ENCODE measurements at regions of chr7 and their contacts with region 1.

Region 1: DNA sequence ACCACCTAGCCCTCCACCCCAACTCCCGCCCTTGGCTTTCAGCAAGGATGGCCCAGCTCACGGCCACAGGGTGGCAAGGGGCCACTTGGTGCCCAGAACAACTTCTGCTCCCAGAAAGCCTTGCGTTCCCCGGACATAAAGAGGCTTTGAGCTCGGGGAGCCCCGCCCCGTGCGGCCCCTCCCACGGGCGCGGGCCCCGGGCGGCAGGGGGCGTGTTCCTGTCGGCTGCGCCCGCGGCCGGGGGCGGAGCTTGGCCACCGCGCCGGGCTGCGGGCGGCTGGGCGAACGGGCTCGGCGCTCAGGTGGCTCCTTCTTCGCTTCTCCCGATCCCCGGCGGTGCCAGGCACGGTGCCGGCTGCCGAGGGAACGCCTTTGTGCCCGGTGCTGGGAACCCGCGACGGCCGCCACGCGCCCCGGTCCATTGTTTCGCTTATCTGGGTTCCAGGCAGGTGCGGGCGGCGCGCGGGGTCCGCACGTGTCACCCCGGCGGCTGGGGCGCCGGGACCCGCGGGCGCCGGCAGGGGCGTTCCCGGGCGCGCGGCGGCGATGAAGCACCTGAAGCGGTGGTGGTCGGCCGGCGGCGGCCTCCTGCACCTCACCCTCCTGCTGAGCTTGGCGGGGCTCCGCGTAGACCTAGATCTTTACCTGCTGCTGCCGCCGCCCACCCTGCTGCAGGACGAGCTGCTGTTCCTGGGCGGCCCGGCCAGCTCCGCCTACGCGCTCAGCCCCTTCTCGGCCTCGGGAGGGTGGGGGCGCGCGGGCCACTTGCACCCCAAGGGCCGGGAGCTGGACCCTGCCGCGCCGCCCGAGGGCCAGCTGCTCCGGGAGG is at the start of gene NFE2L3:
- DNase-seq: peak in 1 of 2 experiments; percentile 87
- H3K4me3 ChIP-seq: peak within 1 kb of the TSS; percentile 65 to 99 (median 95)
- H3K27ac ChIP-seq: peak within 1 kb of the TSS; percentile 91
- H3K4me1 ChIP-seq: peaks cover 17 to 32% (median 22%) of the 10 kb centered on the region in 4 experiments
- H3K27me3 ChIP-seq: peaks cover 0 to 7% (median 0%) of the 10 kb centered on the region in 4 experiments; a peak in 2 of 7 replicates
- CTCF ChIP-seq: peak in 1 of 3 experiments; percentile 18; a peak in 1 of 4 replicates
- EP300 ChIP-seq: peak in 1 of 2 experiments; percentile 4; a peak in 1 of 3 replicates
- POLR2A ChIP-seq: peak; percentile 67 to 77
- RAD21 ChIP-seq: peak in 1 of 2 experiments; percentile 24; a peak in 1 of 4 replicates
- total RNA-seq, gene NFE2L3: 62.6 and 64.9 TPM in 2 replicates

Region 2: DNA sequence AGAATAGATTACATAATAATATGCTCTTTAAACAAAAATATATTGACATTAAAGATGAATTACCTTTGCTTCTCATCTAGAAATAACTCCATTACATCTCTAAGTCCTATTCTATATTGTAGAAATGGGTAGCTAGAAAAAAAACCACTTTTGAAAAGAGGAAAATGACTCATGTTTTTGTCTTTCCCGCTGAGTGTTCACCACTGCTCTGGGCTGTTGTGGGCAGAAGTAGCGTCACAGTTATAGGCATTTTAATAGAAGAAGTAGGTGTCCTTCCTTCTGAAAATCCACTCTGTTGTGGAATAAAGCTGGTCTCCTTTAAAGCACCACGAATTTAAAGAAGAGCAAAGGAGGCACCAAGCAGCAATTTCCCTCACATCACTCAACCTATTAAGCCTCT is 117.8 kb before region 1 on chr7:
- CTCF ChIA-PET with region 1: no interaction called
- POLR2A ChIA-PET with region 1: no interaction called
- DNase-seq: no peak
- H3K4me3 ChIP-seq: no peak overlapping the region
- H3K27ac ChIP-seq: no peak overlapping the region
- H3K4me1 ChIP-seq: no peaks in the 10 kb centered on the region
- H3K27me3 ChIP-seq: no peaks in the 10 kb centered on the region
- CTCF ChIP-seq: no peak
- EP300 ChIP-seq: no peak
- POLR2A ChIP-seq: no peak
- RAD21 ChIP-seq: no peak

Region 3: GRCh38 chr7:26167301-26167934 is 15.3 kb after region 1 on chr7:
- CTCF ChIA-PET with region 1: interaction called, 3 read pairs
- POLR2A ChIA-PET with region 1: interaction called, 25 read pairs
- DNase-seq: no peak
- H3K4me3 ChIP-seq: no peak overlapping the region
- H3K27ac ChIP-seq: no peak overlapping the region
- H3K4me1 ChIP-seq: peaks cover 5 to 16% (median 10%) of the 10 kb centered on the region in 4 experiments; a peak in 6 of 7 replicates
- H3K27me3 ChIP-seq: no peaks in the 10 kb centered on the region
- CTCF ChIP-seq: no peak
- EP300 ChIP-seq: no peak
- POLR2A ChIP-seq: no peak
- RAD21 ChIP-seq: no peak

Region 4: GRCh38 chr7:26193432-26194207 is 41.5 kb after region 1 on chr7:
- CTCF ChIA-PET with region 1: interaction called, 4 read pairs
- POLR2A ChIA-PET with region 1: interaction called, 56 read pairs
- DNase-seq: no peak
- H3K4me3 ChIP-seq: no peak overlapping the region
- H3K27ac ChIP-seq: no peak overlapping the region
- H3K4me1 ChIP-seq: peaks cover 0 to 6% (median 0%) of the 10 kb centered on the region in 4 experiments; a peak in 3 of 7 replicates
- H3K27me3 ChIP-seq: no peaks in the 10 kb centered on the region
- CTCF ChIP-seq: no peak
- EP300 ChIP-seq: no peak
- POLR2A ChIP-seq: peak in 1 of 2 experiments; percentile 34; a peak in 2 of 3 replicates
- RAD21 ChIP-seq: no peak

Measured in H1 (cell line).